ENCODE measurements at regions of chr14 and their contacts with region 1.

Region 1: GRCh38 chr14:72904840-72905561 is 11.1 kb upstream of the DPF3 start:
- DNase-seq: peak in 1 of 2 donors; percentile 65
- ATAC-seq: peak; percentile 83
- H3K4me3 ChIP-seq: no peak overlapping the region
- H3K27ac ChIP-seq: peak overlapping the region in 1 of 2 donors; percentile 29
- H3K4me1 ChIP-seq: peaks cover 0 to 6% of the 10 kb centered on the region in 2 donors
- H3K27me3 ChIP-seq: no peaks in the 10 kb centered on the region

Region 2: DNA sequence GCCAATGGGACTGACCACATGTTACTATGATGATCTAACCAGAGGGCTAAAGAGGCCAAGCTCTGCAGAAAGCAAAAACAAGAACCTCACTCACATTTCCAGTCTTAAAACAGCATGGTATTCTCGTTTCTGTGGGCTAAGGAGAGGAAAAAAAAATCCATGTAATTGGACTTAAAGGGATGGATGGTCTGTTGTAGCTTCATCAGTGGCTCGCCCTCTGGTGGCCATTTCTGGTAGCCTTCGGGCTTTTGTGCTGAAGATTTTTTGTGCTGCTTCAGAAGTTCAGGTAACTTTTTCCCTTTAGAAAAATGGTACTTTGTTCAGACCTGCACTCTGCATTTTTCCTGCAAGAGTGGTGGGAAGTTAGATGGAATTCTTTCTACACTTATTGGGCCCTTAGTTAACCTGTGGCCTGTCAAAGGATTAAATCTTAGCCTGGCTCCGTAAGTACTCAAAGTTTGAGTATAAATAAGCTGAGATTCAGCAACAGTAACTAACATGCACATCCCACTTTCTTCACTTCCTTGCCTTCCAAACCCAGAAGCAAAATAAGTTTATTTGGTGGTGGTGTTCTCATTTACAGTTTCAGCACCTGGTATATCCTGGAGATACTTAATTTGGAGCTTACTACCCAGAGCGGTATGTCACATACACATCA is 43.6 kb after region 1 on chr14:
- intact Hi-C with region 1: loop called (anchors 5 kb)
- DNase-seq: peak; percentile 77 to 91
- ATAC-seq: no peak
- H3K4me3 ChIP-seq: no peak overlapping the region
- H3K27ac ChIP-seq: no peak overlapping the region
- H3K4me1 ChIP-seq: no peaks in the 10 kb centered on the region
- H3K27me3 ChIP-seq: no peaks in the 10 kb centered on the region

Measured in aorta (tissue), 5 donors.